SK-N-SH (cell line): ENCODE measurements at regions of chr11 and their contacts with region 1.

Region 1: DNA sequence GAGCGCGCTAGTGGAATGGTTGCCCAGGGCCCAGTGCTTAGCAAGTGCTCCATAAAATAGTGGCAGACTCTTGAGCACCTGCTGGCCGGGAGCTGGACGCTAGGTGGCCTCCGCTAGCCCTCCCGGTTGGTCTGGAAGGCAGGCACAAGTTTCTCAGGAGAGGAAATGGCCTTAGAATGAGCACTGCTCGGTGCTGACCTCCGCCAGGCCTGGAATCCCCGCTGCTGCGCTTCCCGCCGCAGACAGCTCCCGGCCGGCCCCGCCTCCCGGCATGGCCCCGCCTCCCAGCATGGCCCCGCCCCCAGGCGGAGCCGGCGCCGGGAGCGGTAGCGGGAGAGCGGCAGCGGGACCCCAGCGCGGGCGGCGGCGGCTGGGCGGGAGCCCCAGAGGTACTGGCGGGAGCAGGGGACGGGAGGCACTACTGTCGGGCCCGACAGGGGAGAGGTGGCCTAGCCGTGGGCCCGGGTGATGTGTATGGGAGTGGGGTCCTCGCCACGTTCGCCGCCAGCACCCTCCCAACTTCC is at the start of gene SIPA1:
- DNase-seq: peak; percentile 96
- H3K4me3 ChIP-seq: peak within 1 kb of the TSS; percentile 81 to 89
- H3K27ac ChIP-seq: peak within 1 kb of the TSS; percentile 61 to 92; a peak in 3 of 4 replicates
- H3K4me1 ChIP-seq: peaks cover 5 to 25% of the 10 kb centered on the region in 2 experiments; a peak in 3 of 4 replicates
- H3K27me3 ChIP-seq: no peaks in the 10 kb centered on the region
- CTCF ChIP-seq: peak; percentile 56
- EP300 ChIP-seq: no peak
- RAD21 ChIP-seq: peak; percentile 56
- polyA plus RNA-seq, gene SIPA1: 15.1 and 18.7 TPM in 2 replicates

Region 2: DNA sequence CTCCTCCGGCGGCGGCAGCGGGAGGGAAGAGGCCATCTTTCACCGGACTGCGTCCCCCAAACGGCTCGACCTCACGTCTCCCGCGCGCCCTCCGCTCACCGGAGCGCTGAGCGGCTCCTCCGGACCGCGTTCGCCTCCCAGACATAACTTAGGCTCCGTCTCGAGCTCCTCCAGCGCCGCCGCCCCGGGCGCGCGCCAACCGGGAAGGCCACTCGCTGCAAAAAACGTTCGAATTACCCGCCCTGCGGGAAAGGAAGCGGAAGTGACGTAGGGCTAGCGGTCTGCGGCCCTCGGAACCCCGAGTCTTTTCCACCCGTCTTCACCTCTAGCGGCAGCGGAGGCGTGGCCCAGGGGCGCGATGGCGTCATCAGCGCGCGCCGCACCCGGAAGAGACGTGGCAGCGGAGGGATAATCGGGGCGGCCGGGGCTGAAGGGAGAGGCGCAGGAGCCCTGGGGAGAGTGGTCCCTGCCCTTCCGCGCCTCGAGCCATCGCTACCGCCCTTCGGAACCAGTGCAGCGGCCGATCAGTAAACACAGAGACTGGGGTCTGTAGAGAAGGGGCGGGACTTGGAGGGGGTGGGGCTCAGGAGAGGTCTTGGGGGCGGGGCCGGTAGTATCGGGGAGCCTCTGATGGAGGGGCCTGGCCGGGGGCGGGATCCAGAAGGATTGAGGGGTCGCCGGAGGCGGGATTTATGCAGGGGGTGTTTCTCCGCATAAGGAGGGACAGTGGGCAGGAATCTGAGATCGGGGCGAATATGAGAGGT is 553.8 kb before region 1 on chr11 and contains the starts of genes CDCA5 and ZFPL1:
- CTCF ChIA-PET with region 1: no interaction called
- POLR2A ChIA-PET with region 1: no interaction called
- DNase-seq: peak; percentile 99
- H3K4me3 ChIP-seq: peak within 1 kb of the TSS; percentile 87 to 92
- H3K27ac ChIP-seq: peak within 1 kb of the TSS; percentile 88 to 93
- H3K4me1 ChIP-seq: peaks cover 8 to 20% of the 10 kb centered on the region in 2 experiments
- H3K27me3 ChIP-seq: no peaks in the 10 kb centered on the region
- CTCF ChIP-seq: no peak
- EP300 ChIP-seq: 0 out of 4 replicates have a peak, but pooled peaks of 1 of the 2 experiments have one; percentile 6
- RAD21 ChIP-seq: no peak
- polyA plus RNA-seq, gene CDCA5: 13.1 and 16.3 TPM in 2 replicates
- polyA plus RNA-seq, gene ZFPL1: 55.7 and 75.9 TPM in 2 replicates

Region 3: DNA sequence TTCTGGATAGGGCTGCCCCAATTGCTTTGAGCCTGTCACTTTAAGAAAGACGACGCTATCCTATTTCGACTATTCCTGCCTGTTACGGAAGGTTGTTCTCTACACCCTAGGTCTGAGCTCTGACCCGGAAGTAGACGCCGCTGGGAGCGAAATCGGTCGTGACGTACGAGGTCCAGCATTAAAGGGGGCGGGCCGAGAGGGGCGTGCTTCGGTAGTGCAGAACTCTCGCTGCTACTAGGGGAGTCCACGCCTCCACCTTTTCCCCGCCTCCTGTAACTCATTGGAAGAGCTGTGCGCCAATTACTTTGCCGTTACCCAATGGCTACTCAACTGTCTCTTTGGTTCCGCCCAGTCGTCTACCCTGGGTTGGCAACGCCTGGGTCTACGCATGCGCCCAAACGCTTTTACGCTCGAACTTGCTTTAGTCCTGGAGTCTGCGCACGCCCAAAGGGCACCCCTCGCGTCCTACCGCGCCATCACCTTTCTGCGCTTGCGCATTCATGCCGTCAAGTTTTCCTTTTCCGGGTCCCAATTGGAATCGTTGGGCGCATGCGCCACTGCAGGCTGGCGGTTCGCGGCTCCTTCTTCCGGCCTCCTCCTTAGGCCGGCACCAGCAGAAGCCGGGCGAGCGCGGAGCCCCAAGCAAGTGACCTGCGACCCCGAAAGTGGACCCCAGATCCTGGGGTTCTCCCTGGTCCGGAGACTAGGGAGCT is 22.5 kb before region 1 on chr11 and contains the start of gene PCNX3:
- CTCF ChIA-PET with region 1: interaction called, 18 read pairs
- POLR2A ChIA-PET with region 1: interaction called, 5 read pairs
- DNase-seq: peak; percentile 100
- H3K4me3 ChIP-seq: peak within 1 kb of the TSS; percentile 87 to 95
- H3K27ac ChIP-seq: peak within 1 kb of the TSS; percentile 83 to 93
- H3K4me1 ChIP-seq: peaks cover 25 to 36% of the 10 kb centered on the region in 2 experiments; a peak in 3 of 4 replicates
- H3K27me3 ChIP-seq: no peaks in the 10 kb centered on the region
- CTCF ChIP-seq: no peak
- EP300 ChIP-seq: peak in 1 of 2 experiments; percentile 39; a peak in 1 of 4 replicates
- RAD21 ChIP-seq: no peak
- polyA plus RNA-seq, gene PCNX3: 23.8 and 33.7 TPM in 2 replicates

Region 4: GRCh38 chr11:65652511-65653231 is 14.8 kb after region 1 on chr11:
- CTCF ChIA-PET with region 1: interaction called, 17 read pairs
- POLR2A ChIA-PET with region 1: interaction called, 25 read pairs
- DNase-seq: peak; percentile 99
- H3K4me3 ChIP-seq: peak overlapping the region; percentile 51 to 56
- H3K27ac ChIP-seq: peak overlapping the region; percentile 92 to 98
- H3K4me1 ChIP-seq: peaks cover 11 to 24% of the 10 kb centered on the region in 2 experiments
- H3K27me3 ChIP-seq: no peaks in the 10 kb centered on the region
- CTCF ChIP-seq: no peak
- EP300 ChIP-seq: peak in 1 of 2 experiments; percentile 30; a peak in 1 of 4 replicates
- RAD21 ChIP-seq: no peak

Region 5: DNA sequence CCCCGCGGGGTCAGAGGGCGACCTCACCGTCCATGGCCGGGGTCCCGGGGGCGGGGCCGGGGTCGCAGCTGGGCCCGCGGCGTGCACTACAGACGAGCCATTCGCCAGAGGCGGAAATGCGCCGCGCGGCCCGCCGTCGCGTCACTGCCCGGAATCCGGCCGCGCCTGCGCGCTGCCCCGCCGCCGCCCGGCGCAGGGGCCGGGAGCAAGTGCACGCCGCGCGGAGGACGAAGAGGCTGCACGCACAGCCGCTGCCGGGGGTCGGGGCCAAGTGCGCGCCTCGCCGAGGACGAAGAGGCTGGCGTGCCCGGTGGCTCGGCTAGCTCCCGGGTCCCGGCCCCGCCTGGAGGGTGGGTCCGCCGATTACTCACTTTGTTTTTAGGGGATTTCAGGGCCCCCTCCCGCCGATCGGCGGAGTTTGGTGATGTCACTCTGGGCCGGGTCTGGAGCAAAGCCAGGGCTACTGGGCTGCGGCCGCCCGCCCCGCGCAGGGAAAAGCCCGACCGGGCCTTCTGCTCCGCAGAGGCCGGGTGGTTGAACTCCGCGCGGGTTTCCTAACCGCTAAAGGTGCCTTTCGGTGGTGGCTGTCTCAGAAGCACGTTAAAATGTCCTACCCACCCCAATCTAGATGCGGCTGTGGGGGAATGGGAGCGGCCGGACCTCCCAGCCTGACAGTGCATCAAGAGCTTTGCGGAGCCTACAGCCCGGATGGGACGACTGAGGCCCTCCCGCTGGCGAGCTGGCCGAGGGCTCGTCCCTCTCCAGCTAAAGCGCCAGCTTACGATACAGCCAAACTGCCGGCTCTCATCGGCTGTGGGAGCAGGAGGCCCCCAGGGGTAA is 25.2 kb after region 1 on chr11 and contains the start of gene RELA:
- CTCF ChIA-PET with region 1: interaction called, 5 read pairs
- POLR2A ChIA-PET with region 1: interaction called, 11 read pairs
- DNase-seq: peak; percentile 98
- H3K4me3 ChIP-seq: peak within 1 kb of the TSS; percentile 83 to 90
- H3K27ac ChIP-seq: peak within 1 kb of the TSS; percentile 95 to 97
- H3K4me1 ChIP-seq: peaks cover 9% of the 10 kb centered on the region in 2 experiments; a peak in 3 of 4 replicates
- H3K27me3 ChIP-seq: no peaks in the 10 kb centered on the region
- CTCF ChIP-seq: no peak
- EP300 ChIP-seq: no peak
- RAD21 ChIP-seq: no peak
- polyA plus RNA-seq, gene RELA: 28.1 and 49.5 TPM in 2 replicates